Activated CD8-positive, alpha-beta T cell treated with anti-CD3 and anti-CD28 coated beads, Interleukin-2, amount 10 ng/mL, durations not matched to agents 7 days and 5 days (primary cell): ENCODE measurements at regions of chr11 and their contacts with region 1.

Region 1: DNA sequence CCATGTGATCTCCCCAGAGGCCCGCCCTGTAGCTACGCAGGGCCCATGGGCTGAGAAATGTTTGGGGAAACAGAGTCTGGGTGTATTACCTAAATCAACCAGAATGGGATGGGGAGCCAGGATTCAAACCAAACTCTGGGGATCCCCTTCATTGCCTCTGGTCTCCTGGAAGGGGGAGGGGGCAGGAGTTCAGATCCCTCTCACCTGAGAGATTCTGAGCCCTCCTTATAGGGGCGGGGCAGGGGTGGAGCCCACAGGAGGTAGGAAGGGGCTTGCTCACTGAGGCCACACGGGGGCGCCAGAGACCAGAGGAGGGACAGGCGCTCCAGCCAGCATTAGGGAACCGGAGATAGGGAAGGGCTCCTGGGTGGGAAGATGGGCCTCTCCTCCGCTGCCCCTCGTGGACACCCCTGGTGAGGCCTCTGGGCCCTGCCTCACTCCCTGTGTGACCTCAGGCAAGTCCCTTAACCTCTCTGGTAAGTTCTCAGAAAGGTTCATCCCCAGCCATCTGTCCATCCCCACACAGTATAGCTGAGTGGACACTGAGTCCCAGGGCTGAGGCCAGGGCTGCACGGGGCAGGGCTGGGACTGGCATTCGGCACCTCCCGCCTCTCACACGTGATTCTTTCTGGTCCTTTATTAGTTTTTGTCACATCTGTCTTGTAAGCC is 2.7 kb upstream of the CDC42BPG start:
- DNase-seq: peak; percentile 94
- ATAC-seq: peak; percentile 70
- H3K4me3 Mint-ChIP-seq: no peak overlapping the region
- H3K27ac Mint-ChIP-seq: peak overlapping the region; percentile 6
- H3K4me1 Mint-ChIP-seq: peaks cover 61% of the 10 kb centered on the region
- H3K27me3 Mint-ChIP-seq: no peaks in the 10 kb centered on the region

Region 2: DNA sequence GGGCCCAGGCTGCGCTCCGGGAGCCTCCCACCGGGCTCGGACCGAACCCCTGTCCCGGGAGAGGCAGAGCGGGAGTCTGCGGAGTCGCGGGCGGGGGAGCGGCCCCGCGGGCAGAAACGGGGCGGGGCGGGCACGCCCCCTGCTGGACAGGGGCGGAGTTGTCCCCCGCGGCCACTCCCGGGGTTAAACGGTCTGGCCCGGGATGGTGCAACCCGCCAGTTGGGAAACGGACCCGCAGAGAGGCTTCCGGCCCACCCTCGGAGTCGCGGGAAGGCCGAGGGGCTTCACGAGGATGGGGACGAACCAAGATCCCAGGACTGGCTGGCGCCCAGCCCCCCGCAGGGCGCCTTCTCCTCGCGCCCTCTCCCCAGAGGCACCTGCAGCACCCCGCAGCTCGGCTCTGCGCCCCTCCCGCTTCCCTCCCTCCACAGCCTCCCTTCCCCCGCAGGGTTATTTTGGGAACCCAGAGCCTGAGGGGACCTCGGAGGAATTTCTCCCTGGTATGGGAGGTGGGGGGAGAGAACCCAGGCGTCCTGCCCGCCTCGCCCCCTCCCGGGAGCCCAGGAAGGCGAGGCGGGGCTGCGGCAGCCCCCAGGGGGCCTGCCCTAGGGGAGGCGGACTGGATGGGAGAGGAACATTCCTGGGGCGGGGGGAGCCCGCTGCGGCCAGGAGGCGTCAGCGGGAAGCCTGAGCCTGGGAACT is 104.1 kb before region 1 on chr11:
- CTCF ChIA-PET with region 1: interaction called, 11 read pairs
- POLR2A ChIA-PET with region 1: no interaction called
- DNase-seq: peak; percentile 78
- ATAC-seq: peak; percentile 24
- H3K4me3 Mint-ChIP-seq: peak overlapping the region; percentile 84
- H3K27ac Mint-ChIP-seq: no peak overlapping the region
- H3K4me1 Mint-ChIP-seq: peaks cover 42% of the 10 kb centered on the region
- H3K27me3 Mint-ChIP-seq: no peaks in the 10 kb centered on the region

Region 3: DNA sequence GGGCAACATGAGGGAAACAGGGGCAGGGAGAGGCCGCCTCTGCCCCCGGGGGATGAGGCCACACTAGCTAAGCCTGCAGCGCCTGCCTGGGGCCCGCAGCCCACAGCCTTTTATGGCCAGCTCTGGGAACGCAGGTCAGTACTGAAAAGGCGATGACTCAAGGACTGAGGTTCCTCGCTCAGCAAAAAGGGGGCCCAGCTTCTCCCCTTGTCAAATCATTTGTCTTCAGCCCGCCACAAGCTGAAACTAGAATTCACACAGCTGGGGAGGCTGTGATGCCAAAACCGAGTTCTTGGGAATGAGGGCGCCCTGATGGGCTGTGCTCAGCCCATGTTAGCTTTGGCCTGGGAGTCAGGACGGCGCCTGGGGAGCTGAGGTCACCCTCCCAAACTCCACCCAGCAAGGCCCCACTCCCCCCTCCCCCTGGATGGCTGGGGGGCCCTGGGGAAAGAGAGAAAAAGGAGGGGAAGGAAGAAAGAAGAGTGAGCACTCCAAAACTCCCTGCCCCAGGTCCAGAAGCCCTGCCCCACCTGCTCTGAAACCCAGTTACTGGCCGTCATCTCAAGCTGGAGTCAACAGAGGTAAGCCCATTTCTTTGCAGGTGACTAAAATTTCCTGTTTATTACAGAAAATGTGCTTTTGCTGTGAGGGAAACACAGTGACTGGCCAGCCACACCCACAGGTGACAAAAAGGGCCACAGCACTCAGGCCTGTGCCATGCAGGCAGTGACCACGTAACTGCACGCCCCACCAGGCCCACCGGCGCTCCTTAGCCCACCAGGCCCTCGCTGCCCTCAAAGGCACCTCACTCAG is 17.5 kb after region 1 on chr11:
- CTCF ChIA-PET with region 1: interaction called, 323 read pairs
- POLR2A ChIA-PET with region 1: interaction called, 109 read pairs
- DNase-seq: peak; percentile 57
- ATAC-seq: peak; percentile 5
- H3K4me3 Mint-ChIP-seq: peak overlapping the region; percentile 63
- H3K27ac Mint-ChIP-seq: peak overlapping the region; percentile 94
- H3K4me1 Mint-ChIP-seq: peaks cover 94% of the 10 kb centered on the region
- H3K27me3 Mint-ChIP-seq: no peaks in the 10 kb centered on the region

Region 4: GRCh38 chr11:64887757-64888405 is 40.7 kb after region 1 on chr11:
- CTCF ChIA-PET with region 1: interaction called, 491 read pairs
- POLR2A ChIA-PET with region 1: interaction called, 469 read pairs
- DNase-seq: peak; percentile 88
- ATAC-seq: peak; percentile 91
- H3K4me3 Mint-ChIP-seq: peak overlapping the region; percentile 52
- H3K27ac Mint-ChIP-seq: peak overlapping the region; percentile 81
- H3K4me1 Mint-ChIP-seq: peaks cover 43% of the 10 kb centered on the region
- H3K27me3 Mint-ChIP-seq: no peaks in the 10 kb centered on the region

Region 5: GRCh38 chr11:65111744-65112414 is 264.7 kb after region 1 on chr11 and contains the start of gene TM7SF2:
- CTCF ChIA-PET with region 1: interaction called, 27 read pairs
- POLR2A ChIA-PET with region 1: interaction called, 4 read pairs
- DNase-seq: peak; percentile 97
- ATAC-seq: peak; percentile 78
- H3K4me3 Mint-ChIP-seq: peak within 1 kb of the TSS; percentile 89
- H3K27ac Mint-ChIP-seq: peak within 1 kb of the TSS; percentile 91
- H3K4me1 Mint-ChIP-seq: peaks cover 52% of the 10 kb centered on the region
- H3K27me3 Mint-ChIP-seq: no peaks in the 10 kb centered on the region
- total RNA-seq, gene TM7SF2: 25.3 to 26.1 TPM